ENCODE measurements at regions of chr16 and their contacts with region 1.

Region 1: GRCh38 chr16:22195695-22196558 is 10.2 kb upstream of the EEF2K start:
- DNase-seq: peak; percentile 88 to 95 (median 93)
- ATAC-seq: peak; percentile 42
- H3K4me3 ChIP-seq: peak overlapping the region; percentile 40 to 53
- H3K27ac ChIP-seq: peak overlapping the region; percentile 70 to 88
- H3K4me1 ChIP-seq: peaks cover 12 to 32% of the 10 kb centered on the region in 2 donors
- H3K27me3 ChIP-seq: no peaks in the 10 kb centered on the region
- CTCF ChIP-seq: peak; percentile 75 to 92

Region 2: GRCh38 chr16:22297114-22297878 is 101.4 kb after region 1 on chr16 and contains the start of gene POLR3E:
- intact Hi-C with region 1: loop called in 1 of 2 experiments (anchors 5 kb)
- DNase-seq: peak; percentile 98 to 100 (median 100)
- ATAC-seq: peak; percentile 98
- H3K4me3 ChIP-seq: peak within 1 kb of the TSS; percentile 84 to 98
- H3K27ac ChIP-seq: peak within 1 kb of the TSS; percentile 86 to 92
- H3K4me1 ChIP-seq: peaks cover 0 to 37% of the 10 kb centered on the region in 2 donors
- H3K27me3 ChIP-seq: no peaks in the 10 kb centered on the region
- CTCF ChIP-seq: peak; percentile 82 to 97
- polyA plus RNA-seq, gene POLR3E: 47.0 to 61.2 (median 54.3) TPM